ENCODE measurements at regions of chr1 and their contacts with region 1.

Region 1: GRCh38 chr1:214551436-214552173 is at the start of gene PTPN14:
- DNase-seq: peak; percentile 27 to 92
- H3K4me3 ChIP-seq: peak within 1 kb of the TSS; percentile 90 to 96
- H3K27ac ChIP-seq: peak within 1 kb of the TSS; percentile 99 to 100
- H3K4me1 ChIP-seq: peaks cover 0 to 30% of the 10 kb centered on the region in 2 donors
- H3K27me3 ChIP-seq: no peaks in the 10 kb centered on the region
- CTCF ChIP-seq: peak in 2 of 3 experiments; percentile 46 to 52
- total RNA-seq, gene PTPN14: 27.2 TPM

Region 2: DNA sequence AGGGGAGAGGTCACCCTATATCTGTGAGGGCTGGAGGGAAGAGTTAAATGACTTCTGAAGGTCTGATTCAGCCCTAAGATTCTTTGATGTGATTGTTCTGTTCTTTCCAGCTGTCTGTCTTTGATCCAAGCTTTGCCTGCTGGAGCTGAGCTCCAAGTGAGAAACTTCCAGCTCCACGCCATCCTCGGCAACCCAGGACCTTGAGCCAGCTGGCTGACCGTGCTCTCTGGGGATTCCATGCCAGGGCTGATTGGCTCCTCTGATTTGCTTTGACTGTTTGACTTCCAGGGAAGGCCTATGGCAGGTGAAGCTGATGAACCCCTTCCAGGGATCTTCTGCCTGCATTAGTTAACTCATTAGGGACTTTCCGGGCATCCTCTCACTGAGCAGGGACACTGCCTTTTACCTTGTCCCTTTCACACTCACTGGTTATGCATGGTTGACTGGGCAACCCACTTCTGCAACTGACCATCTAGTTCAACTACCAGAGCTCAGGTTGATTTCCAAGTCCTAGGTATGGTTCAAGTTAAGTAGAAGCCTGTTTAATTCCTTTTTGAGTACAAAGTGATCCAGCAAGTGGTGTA is 1094.4 kb before region 1 on chr1:
- intact Hi-C with region 1: loop called (anchors 5 kb)
- DNase-seq: peak; percentile 34 to 85
- H3K4me3 ChIP-seq: peak overlapping the region; percentile 11 to 25
- H3K27ac ChIP-seq: peak overlapping the region; percentile 73 to 77
- H3K4me1 ChIP-seq: peaks cover 3 to 15% of the 10 kb centered on the region in 2 donors
- H3K27me3 ChIP-seq: no peaks in the 10 kb centered on the region
- CTCF ChIP-seq: no peak

Region 3: DNA sequence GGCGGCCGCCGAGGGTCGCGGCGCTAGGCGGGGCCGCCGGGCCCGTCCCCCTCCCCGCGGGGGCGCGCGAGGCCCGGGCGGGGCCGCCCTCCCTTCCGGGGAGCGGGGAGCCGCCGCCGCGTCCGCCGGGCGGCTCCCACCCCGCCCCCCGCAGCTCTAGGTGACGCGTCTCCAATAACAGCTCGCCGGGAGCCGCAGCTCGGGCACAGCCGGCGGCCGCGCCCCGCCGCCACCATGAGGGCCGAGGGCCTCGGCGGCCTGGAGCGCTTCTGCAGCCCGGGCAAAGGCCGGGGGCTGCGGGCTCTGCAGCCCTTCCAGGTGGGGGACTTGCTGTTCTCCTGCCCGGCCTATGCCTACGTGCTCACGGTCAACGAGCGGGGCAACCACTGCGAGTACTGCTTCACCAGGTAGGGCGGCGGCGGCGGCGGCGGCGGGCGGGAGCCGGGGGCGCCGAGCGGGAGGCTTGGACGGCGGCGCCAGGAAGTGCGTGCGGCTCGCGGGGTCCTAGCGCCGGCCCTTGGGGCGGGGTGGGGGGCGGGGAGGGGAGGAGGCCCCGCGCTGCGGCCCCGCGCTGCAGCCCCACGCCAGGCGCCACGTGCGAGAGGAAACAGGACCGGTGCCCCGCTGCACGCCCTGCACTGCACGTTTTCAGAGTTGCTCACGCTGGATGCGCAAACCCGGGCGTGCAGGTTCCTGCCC is 270.4 kb before region 1 on chr1 and contains the start of gene SMYD2:
- intact Hi-C with region 1: loop called (anchors 1 kb)
- DNase-seq: peak in 1 of 2 donors; percentile 78
- H3K4me3 ChIP-seq: peak within 1 kb of the TSS; percentile 98 to 99
- H3K27ac ChIP-seq: peak within 1 kb of the TSS; percentile 86 to 87
- H3K4me1 ChIP-seq: peaks cover 0 to 4% of the 10 kb centered on the region in 2 donors
- H3K27me3 ChIP-seq: no peaks in the 10 kb centered on the region
- CTCF ChIP-seq: no peak
- total RNA-seq, gene SMYD2: 2.4 TPM

Region 4: DNA sequence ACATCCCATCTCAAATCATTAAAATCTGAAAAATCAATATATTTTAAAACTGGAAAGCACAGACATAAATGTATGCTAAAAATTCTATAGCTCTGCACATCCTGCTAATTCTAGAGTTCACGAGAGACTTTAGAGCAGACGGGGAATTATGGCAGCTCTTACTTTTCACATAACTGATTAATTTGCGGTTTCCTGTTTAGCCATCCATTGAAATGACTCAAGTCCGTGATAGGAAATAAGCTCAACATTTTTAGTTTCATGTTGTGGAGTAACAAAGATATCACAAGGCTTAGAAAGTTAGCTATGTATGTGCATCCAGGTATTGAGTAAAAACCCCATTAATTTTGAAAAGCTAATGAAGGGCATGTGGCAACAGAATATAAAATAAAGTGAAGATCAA is 147.5 kb before region 1 on chr1:
- intact Hi-C with region 1: no loop called
- DNase-seq: no peak
- H3K4me3 ChIP-seq: no peak overlapping the region
- H3K27ac ChIP-seq: no peak overlapping the region
- H3K4me1 ChIP-seq: no peaks in the 10 kb centered on the region
- H3K27me3 ChIP-seq: no peaks in the 10 kb centered on the region
- CTCF ChIP-seq: no peak

Region 5: DNA sequence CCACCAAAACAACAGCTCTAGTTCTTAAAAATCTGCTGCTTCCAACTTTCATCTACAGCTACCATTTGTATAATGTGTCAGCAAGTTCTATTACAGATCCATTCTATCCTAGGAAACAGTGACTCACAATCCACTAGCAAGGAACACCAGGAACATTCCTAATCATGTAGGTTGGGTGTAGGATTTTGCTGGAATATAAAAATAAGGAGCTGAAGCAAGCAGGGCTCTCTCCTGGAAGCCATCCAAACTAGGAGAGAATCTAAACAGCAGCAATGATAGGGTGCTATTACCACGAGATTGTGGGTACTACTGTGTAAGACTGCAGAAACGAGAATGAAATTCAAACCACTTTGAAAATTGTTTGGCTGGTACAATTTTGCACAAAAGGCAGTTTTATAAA is 135.2 kb before region 1 on chr1:
- intact Hi-C with region 1: loop called (anchors 2 kb)
- DNase-seq: no peak
- H3K4me3 ChIP-seq: no peak overlapping the region
- H3K27ac ChIP-seq: peak overlapping the region; percentile 60 to 70
- H3K4me1 ChIP-seq: peaks cover 4 to 34% of the 10 kb centered on the region in 2 donors
- H3K27me3 ChIP-seq: no peaks in the 10 kb centered on the region
- CTCF ChIP-seq: no peak

Region 6: GRCh38 chr1:214473387-214473786 is 78.2 kb before region 1 on chr1:
- intact Hi-C with region 1: no loop called
- DNase-seq: no peak
- H3K4me3 ChIP-seq: no peak overlapping the region
- H3K27ac ChIP-seq: no peak overlapping the region
- H3K4me1 ChIP-seq: no peaks in the 10 kb centered on the region
- H3K27me3 ChIP-seq: no peaks in the 10 kb centered on the region
- CTCF ChIP-seq: no peak

Region 7: DNA sequence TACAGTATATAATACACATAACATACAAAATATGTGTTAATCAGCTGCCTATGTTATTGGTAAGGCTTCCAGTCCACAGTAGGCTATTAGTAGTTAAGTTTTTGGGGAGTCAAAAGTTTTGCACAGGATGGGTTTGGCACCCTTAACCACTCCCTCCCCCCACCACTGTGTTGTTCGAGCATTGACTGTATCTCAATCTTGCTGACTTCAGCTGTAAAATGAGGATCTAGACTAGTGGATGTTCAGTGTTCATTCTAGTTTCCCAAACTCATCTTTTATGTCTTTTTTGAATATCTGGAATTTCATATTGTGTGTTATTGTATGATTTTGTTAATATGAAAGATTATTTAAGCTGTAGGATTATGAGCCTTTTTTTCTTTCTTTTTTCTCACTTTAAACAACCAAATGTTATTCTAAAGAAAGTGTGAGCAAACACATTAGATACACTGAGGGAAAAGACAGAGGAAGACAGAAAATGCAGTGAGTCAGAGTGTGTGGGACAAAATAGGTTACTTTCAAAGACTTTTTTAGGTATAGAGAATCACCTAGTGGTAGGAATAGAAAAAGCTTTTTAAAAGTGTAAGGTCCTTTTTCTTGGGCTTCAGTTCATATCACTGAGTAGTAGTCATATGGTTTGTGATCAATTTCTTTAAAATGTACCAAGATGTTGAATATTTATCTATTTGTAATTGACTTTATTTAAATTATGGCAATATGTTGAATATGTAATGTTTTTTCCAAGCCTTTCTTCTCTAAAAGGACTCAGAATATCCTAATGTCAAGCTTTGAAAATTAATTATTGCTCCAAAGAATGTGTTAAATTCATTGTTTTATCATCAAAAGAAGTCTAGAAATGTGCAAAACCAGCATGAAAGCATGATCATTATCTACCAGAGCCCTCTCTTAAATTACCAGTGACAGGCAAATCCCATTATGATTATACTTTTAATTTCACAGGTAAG is 33.5 kb after region 1 on chr1:
- intact Hi-C with region 1: loop called (anchors 2 kb)
- DNase-seq: no peak
- H3K4me3 ChIP-seq: no peak overlapping the region
- H3K27ac ChIP-seq: no peak overlapping the region
- H3K4me1 ChIP-seq: peaks cover 0 to 5% of the 10 kb centered on the region in 2 donors
- H3K27me3 ChIP-seq: no peaks in the 10 kb centered on the region
- CTCF ChIP-seq: peak; percentile 57 to 66 (median 64)

Region 8: DNA sequence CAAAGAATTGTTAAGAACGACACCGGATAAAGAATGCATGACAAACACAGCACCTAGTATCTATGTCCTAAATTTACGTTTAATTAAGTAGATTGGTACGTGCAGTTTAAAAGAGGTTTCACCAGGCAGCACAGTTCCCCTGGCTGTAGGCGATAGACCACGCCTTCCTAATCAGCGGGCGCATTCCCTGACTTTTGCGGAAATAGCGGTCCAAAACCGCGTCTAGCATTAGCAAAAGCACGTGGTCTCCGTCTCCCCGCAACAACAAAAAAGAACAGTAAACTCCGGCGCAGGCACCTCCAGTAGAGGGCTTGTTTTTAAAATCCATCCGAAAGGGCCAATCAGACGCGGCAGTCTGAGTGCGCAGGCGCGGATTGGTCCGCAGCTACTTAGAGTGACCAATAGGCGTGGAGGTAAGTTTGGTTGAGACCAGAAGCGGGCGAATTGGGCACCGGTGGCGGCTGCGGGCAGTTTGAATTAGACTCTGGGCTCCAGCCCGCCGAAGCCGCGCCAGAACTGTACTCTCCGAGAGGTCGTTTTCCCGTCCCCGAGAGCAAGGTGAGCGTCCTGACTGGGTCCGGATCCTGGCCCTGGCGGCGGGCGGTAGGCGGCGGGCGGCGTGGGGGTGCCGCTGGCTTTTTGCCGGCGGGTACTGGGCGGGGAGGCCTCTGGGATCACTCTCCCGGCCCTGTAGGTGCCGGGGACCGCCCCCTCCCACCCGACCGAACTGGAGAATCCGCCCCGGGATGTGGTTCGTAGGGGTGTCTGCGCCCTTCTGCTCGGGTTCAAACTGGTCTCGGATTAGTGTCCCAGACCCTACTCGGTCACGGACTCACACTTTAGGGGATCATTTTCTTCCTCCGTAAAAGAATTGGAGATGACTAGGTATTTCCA is 51.4 kb after region 1 on chr1 and contains the start of gene CENPF:
- intact Hi-C with region 1: loop called (anchors 2 kb)
- DNase-seq: peak; percentile 90 to 97
- H3K4me3 ChIP-seq: peak within 1 kb of the TSS; percentile 71 to 84
- H3K27ac ChIP-seq: no peak within 1 kb of the TSS
- H3K4me1 ChIP-seq: no peaks in the 10 kb centered on the region
- H3K27me3 ChIP-seq: no peaks in the 10 kb centered on the region
- CTCF ChIP-seq: peak in 1 of 3 experiments; percentile 40
- total RNA-seq, gene CENPF: 0.53 TPM

Region 9: GRCh38 chr1:214876241-214876640 is 324.6 kb after region 1 on chr1:
- intact Hi-C with region 1: no loop called
- DNase-seq: no peak
- H3K4me3 ChIP-seq: no peak overlapping the region
- H3K27ac ChIP-seq: no peak overlapping the region
- H3K4me1 ChIP-seq: no peaks in the 10 kb centered on the region
- H3K27me3 ChIP-seq: no peaks in the 10 kb centered on the region
- CTCF ChIP-seq: no peak

Measured in ascending aorta (tissue), 2 donors.